Mammary epithelial cell (primary cell): ENCODE measurements at regions of chr11 and their contacts with region 1.

Region 1: DNA sequence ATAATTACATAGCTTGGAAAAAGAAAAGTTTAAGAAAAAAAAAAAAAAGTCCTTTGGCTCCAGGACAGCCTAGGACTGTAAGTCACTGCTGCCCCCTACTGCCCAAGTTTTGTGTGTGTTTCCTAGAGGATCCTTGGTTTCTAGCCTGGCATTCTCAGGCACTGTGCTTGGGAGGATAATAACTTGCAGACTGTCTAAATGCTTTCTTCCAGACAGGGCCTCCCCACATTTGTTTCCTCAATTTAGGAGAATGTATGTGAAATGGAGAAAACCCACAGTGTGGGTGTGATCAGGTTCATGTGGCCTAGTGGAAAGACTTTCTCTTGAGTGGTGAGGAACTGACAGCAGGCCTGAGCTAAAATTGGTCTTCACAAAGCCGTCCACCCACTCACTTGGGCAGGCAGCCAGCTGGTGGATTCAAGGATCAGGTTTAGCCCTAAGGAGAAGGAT is 191.0 kb downstream of the NAV2 start:
- DNase-seq: peak; percentile 58
- H3K4me3 ChIP-seq: no peak overlapping the region
- H3K27ac ChIP-seq: no peak overlapping the region
- H3K4me1 ChIP-seq: peaks cover 3% of the 10 kb centered on the region
- H3K27me3 ChIP-seq: no peaks in the 10 kb centered on the region
- CTCF ChIP-seq: peak; percentile 82

Region 2: GRCh38 chr11:19553683-19554333 is 349.8 kb before region 1 on chr11:
- CTCF ChIA-PET with region 1: interaction called, 5 read pairs
- dilution Hi-C with region 1: loop called (anchors 25 kb)
- in situ Hi-C with region 1: no loop called
- intact Hi-C with region 1: loop called (anchors 1 kb)
- DNase-seq: peak; percentile 47
- H3K4me3 ChIP-seq: no peak overlapping the region
- H3K27ac ChIP-seq: no peak overlapping the region
- H3K4me1 ChIP-seq: no peaks in the 10 kb centered on the region
- H3K27me3 ChIP-seq: no peaks in the 10 kb centered on the region
- CTCF ChIP-seq: peak; percentile 79 to 89

Region 3: DNA sequence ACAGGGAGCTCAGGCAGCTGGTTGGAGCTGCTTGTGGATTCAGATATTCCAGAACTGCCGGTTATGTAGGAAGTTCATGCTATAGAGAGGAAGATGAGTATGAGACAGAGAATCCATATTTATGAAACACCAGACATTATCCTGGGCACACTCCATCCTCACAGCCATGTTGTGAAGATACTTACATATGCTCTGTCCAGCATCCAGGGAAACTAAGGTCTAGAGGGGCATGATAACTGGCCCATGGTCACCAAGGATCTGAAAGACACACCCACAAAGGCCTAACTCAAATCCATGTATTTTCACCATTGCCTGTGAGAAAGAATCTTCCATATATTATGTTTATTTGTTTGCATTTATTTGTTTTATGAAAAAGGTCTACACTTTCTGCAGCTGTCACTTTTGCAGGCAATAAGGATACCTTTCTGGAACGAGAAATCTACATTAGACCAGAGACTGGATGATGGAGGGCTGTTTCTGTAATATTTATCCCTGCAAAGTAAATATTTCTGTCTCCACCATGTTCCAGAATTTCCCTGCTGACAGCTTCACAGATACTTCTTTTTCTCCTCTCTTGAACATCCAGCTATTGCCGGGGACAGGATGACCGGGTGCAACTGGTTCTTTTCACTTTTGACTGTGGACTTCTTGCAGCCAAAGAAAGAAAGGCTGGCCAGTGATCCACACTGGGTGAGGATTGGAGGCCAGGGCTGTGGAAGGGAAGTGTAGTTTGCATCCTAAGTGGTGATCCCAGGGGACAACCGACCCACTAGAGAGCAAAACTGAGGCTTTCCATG is 336.9 kb before region 1 on chr11:
- CTCF ChIA-PET with region 1: interaction called, 7 read pairs
- dilution Hi-C with region 1: loop called (anchors 25 kb)
- in situ Hi-C with region 1: loop called (anchors 5 kb)
- intact Hi-C with region 1: loop called (anchors 1 kb)
- DNase-seq: no peak
- H3K4me3 ChIP-seq: no peak overlapping the region
- H3K27ac ChIP-seq: no peak overlapping the region
- H3K4me1 ChIP-seq: peaks cover 5% of the 10 kb centered on the region
- H3K27me3 ChIP-seq: no peaks in the 10 kb centered on the region
- CTCF ChIP-seq: no peak

Region 4: DNA sequence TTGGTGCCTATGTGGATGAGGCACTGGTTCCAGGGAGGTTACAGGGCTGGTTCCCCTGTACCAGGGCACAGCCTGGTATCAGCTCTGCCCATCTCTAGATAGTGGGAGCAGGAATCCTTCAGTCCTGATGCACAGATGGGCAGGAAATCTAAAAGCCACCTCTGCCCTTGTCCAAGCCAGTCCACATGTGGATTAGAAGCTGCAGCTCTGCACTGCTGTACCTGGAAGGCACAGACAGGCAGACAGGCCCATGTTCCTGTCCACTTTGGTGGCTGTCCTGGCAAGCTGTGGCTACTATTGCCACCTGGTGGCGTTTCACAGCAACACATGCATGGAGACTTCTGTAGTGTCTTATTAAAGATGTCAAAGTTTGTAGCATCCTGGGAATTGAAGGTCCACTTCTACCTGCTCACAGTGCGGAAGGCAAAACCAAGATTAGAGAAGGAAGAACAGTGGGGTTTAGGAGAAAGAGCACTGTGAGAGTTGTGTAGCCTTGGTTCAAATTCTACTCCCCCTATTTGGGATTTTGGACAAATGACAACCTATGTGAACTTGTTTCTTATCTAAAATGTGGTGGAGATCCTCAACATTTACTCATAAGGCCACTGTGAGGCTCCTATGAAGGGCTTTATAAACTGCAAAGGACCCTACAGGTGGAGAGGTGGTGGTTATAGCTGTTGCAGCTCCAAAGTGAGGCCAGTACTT is 160.9 kb before region 1 on chr11:
- CTCF ChIA-PET with region 1: interaction called, 4 read pairs
- dilution Hi-C with region 1: no loop called
- in situ Hi-C with region 1: no loop called
- intact Hi-C with region 1: loop called (anchors 1 kb)
- DNase-seq: peak; percentile 67
- H3K4me3 ChIP-seq: no peak overlapping the region
- H3K27ac ChIP-seq: no peak overlapping the region
- H3K4me1 ChIP-seq: peaks cover 7% of the 10 kb centered on the region
- H3K27me3 ChIP-seq: no peaks in the 10 kb centered on the region
- CTCF ChIP-seq: peak; percentile 86 to 89

Region 5: GRCh38 chr11:19951558-19952115 is 48.0 kb after region 1 on chr11:
- CTCF ChIA-PET with region 1: no interaction called
- dilution Hi-C with region 1: no loop called
- in situ Hi-C with region 1: no loop called
- intact Hi-C with region 1: loop called (anchors 1 kb)
- DNase-seq: peak; percentile 62
- H3K4me3 ChIP-seq: no peak overlapping the region
- H3K27ac ChIP-seq: no peak overlapping the region
- H3K4me1 ChIP-seq: peaks cover 17% of the 10 kb centered on the region
- H3K27me3 ChIP-seq: no peaks in the 10 kb centered on the region
- CTCF ChIP-seq: peak; percentile 47 to 57

Region 6: DNA sequence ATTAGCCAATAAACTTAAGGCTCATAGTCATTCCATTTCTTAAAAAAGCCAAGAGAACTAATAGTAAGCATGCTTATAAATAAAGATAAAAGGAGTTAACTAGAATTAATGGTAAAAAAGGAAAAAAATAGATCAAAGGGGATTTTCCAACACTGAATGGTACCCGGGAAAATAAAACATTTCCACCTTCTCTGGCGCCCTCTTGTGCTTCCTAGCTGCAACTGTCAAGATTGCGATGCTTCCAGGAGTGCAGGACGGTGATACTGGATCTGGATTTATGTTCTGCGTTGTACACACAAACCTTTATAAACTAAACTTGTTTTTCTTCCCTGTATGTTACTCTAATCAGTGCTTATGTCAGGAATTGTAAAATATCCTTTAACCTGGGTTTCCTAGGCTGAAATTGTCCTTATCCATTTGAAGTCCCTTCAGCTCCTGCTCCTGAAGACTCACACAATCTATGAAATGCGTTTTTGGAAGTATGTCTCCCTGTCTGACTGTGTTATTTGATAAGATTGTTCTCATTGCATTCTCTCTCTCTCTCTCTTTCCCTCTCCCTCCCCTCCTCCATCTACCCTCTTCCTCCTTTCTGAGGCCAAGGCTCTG is 450.3 kb after region 1 on chr11:
- CTCF ChIA-PET with region 1: no interaction called
- dilution Hi-C with region 1: no loop called
- in situ Hi-C with region 1: loop called in 1 of 2 experiments (anchors 25 kb)
- intact Hi-C with region 1: loop called (anchors 1 kb)
- DNase-seq: peak; percentile 26
- H3K4me3 ChIP-seq: no peak overlapping the region
- H3K27ac ChIP-seq: no peak overlapping the region
- H3K4me1 ChIP-seq: no peaks in the 10 kb centered on the region
- H3K27me3 ChIP-seq: no peaks in the 10 kb centered on the region
- CTCF ChIP-seq: peak; percentile 92 to 97